Gastrocnemius medialis (tissue), 4 donors: ENCODE measurements at regions of chr14 and their contacts with region 1.

Region 1: GRCh38 chr14:74362361-74362915 is 14.2 kb downstream of the VRTN start:
- DNase-seq: peak; percentile 56 to 69
- ATAC-seq: peak; percentile 83 to 94
- H3K4me3 ChIP-seq: no peak overlapping the region
- H3K27ac ChIP-seq: no peak overlapping the region
- H3K4me1 ChIP-seq: no peaks in the 10 kb centered on the region
- H3K27me3 ChIP-seq: no peaks in the 10 kb centered on the region
- CTCF ChIP-seq: peak; percentile 82 to 94 (median 88)
- POLR2A ChIP-seq: no peak

Region 2: DNA sequence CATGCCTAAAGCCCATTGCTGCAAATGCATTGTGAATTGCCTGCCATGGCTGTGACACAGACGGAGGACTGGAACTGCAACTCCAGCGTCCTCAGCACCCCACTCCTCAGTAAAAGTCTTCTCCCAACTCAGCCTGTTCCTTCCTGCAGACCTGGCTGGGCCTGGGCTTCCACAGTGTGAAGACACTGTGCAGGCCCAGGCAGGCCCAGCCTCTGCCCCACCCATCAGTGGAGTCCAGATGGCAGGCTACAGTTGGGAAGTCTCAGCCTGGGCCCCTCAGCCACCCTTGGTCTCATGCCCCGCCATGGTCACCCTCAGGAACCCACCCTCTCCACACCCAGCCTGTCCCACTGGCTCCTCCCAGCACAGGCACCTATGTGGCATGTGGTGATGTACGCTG is 101.2 kb before region 1 on chr14:
- in situ Hi-C with region 1: no loop called
- intact Hi-C with region 1: no loop called
- DNase-seq: no peak
- ATAC-seq: no peak
- H3K4me3 ChIP-seq: no peak overlapping the region
- H3K27ac ChIP-seq: no peak overlapping the region
- H3K4me1 ChIP-seq: peaks cover 3 to 13% of the 10 kb centered on the region in 2 donors
- H3K27me3 ChIP-seq: peaks cover 10 to 13% (median 11%) of the 10 kb centered on the region in 3 donors
- CTCF ChIP-seq: no peak
- POLR2A ChIP-seq: no peak

Region 3: DNA sequence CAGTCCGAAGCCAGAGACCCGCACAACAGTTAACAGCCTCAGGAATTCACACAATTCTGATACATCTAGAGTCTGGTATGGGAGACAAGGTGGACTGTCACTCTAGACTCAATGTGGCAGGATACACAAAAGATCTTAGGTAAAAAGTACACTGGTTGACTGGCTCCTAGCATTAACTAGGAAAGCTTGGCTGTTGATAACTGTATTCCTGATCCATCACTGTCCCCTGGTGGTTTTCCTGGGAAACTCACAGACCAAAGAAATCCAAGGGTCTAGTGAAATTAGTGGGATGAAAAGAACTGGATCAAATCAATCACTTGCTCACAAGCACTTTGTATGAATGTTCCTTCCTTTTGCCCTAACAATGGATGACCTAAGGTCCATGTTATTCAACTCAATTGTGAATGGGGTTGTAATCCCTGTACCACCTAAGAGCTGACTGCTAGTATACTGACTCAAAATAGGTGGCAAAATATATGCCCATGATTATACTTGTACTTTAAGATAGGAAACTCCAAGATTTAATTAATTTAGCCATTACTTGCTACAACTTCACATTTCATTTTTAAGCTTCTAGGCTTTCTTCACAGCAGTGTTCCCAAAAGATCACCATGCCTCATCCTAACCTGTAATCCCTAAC is 116.7 kb after region 1 on chr14:
- in situ Hi-C with region 1: loop called in 2 of 4 experiments (anchors 5 to 10 kb)
- intact Hi-C with region 1: loop called (anchors 2 kb)
- DNase-seq: no peak
- ATAC-seq: peak in 1 of 2 donors; percentile 48
- H3K4me3 ChIP-seq: no peak overlapping the region
- H3K27ac ChIP-seq: no peak overlapping the region
- H3K4me1 ChIP-seq: peaks cover 22 to 24% of the 10 kb centered on the region in 2 donors
- H3K27me3 ChIP-seq: no peaks in the 10 kb centered on the region
- CTCF ChIP-seq: peak; percentile 30 to 69 (median 61)
- POLR2A ChIP-seq: no peak

Region 4: DNA sequence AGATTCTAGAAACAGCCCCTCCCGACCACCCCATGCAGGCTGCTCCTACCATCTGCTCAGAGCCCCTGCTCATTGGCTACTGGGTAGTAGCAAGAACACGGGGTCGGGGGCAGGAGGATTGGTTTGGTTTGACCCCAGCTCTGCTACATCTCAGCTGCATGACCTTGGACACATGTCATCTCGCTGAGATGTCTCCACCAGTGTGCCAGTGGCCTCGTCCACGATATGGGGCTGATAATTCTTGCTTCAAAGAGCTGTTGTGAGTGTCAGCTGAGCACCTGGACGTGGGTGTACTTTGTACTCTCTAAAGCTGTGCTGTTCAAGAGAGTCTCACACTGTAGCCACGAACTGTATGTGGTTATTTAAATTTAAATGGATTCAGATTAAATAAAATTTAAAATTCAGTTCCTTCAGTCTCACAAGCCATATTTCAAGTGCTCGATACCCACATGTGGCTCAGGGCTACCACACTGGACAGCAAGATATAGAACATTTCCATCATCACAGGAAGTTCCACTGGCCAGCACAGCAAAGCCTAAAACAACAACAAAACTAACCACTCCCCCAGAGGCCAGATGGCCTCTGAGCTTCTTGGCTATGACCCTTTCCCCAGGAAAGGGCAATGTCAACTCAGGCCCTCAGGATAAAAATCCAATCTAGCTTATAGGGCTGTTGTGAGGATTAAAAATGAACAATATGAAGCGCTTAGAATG is 231.0 kb after region 1 on chr14:
- in situ Hi-C with region 1: no loop called
- intact Hi-C with region 1: no loop called
- DNase-seq: no peak
- ATAC-seq: peak; percentile 59 to 63
- H3K4me3 ChIP-seq: no peak overlapping the region
- H3K27ac ChIP-seq: peak overlapping the region; percentile 55 to 74 (median 66)
- H3K4me1 ChIP-seq: peaks cover 37 to 46% of the 10 kb centered on the region in 2 donors
- H3K27me3 ChIP-seq: no peaks in the 10 kb centered on the region
- CTCF ChIP-seq: no peak
- POLR2A ChIP-seq: no peak